ENCODE measurements at regions of chr3 and their contacts with region 1.

Region 1: GRCh38 chr3:50530001-50530970 is 26.9 kb upstream of the CACNA2D2 start:
- DNase-seq: no peak
- H3K4me3 ChIP-seq: no peak overlapping the region
- H3K27ac ChIP-seq: no peak overlapping the region
- H3K4me1 ChIP-seq: no peaks in the 10 kb centered on the region
- H3K27me3 ChIP-seq: no peaks in the 10 kb centered on the region
- CTCF ChIP-seq: no peak
- EP300 ChIP-seq: no peak
- POLR2A ChIP-seq: no peak

Region 2: DNA sequence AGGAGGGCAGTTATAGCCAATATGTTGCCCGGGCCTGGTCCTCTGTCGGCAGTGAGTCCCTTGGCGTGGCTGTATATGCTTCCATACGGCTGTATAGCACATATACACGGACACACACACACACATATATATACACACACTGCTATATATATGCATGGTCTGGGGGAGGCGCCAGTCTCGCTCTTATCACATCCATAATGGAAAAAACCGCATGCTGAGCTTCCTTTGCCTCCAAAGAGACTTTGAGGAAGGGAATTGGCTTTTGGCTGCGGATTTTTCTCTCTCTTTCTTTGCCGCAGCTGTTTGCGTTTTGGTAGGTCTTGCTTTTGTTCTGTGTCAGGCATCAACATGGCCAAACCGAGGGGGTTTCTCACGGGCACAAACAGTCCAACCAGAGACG is 159.7 kb before region 1 on chr3:
- intact Hi-C with region 1: loop called in 1 of 4 experiments (anchors 10 kb)
- DNase-seq: no peak
- H3K4me3 ChIP-seq: no peak overlapping the region
- H3K27ac ChIP-seq: no peak overlapping the region
- H3K4me1 ChIP-seq: peaks cover 2% of the 10 kb centered on the region
- H3K27me3 ChIP-seq: no peaks in the 10 kb centered on the region
- CTCF ChIP-seq: no peak
- EP300 ChIP-seq: no peak
- POLR2A ChIP-seq: no peak